Activated naive CD4-positive, alpha-beta T cell treated with anti-CD3 and anti-CD28 coated beads for 36 hours (primary cell): ENCODE measurements at regions of chr14 and their contacts with region 1.

Region 1: DNA sequence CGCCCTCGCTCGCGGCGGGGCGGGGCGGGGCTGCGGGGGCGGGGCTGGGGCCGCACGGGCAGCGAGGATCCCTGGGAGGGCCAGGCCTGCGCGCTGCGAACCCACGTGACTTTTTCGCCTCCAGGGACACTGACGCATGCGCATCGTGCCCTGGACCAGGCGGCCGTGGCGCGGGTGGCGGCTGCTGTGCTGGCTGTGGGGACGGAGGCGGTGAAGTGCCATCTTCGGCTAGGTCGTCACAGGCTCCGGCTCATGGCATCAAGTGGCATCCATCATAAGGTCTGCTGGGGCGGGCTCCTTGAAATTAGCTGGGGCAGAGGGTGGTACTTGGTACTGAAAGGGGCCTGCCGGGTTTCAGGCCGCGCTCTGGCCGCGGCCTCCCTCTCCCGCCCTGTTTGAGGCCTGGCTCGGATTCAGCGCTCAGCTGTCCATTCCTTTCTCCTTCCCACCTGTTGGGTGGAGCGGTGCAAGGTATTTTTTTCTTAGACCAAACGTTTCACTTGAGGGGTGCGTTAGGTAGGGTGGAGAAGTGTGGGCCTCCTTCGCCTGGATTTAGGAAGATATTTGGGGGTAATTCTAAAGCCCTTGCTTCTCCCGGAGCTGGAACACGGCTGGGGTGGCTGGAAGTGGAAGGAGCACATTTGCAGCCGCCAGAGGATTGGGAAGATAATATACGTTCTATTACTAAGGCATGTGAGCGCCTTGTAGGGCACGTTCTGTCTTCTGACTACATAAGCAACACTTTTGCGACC is at the start of gene PRPF39:
- DNase-seq: peak; percentile 94
- H3K4me3 Mint-ChIP-seq: peak within 1 kb of the TSS; percentile 96
- H3K27ac Mint-ChIP-seq: peak within 1 kb of the TSS; percentile 93
- H3K4me1 Mint-ChIP-seq: peaks cover 49% of the 10 kb centered on the region
- H3K27me3 Mint-ChIP-seq: no peaks in the 10 kb centered on the region
- total RNA-seq, gene PRPF39: 32.0 to 35.6 TPM

Region 2: DNA sequence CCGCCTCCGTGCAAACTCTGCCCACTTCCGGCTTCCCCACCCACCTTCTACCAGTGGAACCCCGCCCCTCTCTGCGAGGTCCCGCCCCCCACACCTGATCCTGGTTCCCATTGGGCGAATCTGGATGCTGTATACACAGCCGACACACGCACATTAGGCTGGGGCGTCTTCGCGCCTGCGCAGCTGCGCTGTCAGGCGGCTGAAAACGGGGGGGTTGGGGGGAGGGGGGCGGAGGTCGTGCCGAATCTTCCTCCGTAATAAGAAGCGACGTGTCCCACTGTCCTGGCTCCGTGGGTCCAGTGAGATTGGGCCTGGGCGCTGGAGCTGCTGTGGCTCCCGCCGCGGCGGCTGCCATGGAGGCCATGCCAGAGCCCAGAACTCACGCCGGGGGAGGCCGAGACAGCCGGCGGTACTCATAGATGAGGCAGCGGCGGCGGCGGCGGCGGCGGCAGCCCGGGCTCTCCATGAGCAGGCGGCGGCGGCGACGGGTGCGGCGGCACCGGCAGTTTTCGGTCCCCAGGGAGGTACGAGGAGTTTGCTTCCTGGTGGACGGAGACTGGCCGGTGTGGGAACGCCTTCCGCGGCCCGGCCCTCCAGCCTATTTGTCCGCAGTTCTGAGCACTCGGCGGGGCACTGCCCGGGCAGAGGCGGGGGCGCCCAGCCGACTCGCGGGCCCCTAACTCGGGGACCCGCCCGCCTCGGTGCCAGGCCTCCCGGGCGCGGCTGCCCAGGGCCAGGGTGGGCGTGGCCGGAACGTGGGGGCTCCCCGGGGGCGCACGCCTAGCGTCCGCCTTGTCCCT is 186.9 kb before region 1 on chr14:
- CTCF ChIA-PET with region 1: no interaction called
- intact Hi-C with region 1: loop called (anchors 1 kb)
- DNase-seq: peak; percentile 99
- H3K4me3 Mint-ChIP-seq: peak overlapping the region; percentile 89
- H3K27ac Mint-ChIP-seq: peak overlapping the region; percentile 83
- H3K4me1 Mint-ChIP-seq: peaks cover 13% of the 10 kb centered on the region
- H3K27me3 Mint-ChIP-seq: no peaks in the 10 kb centered on the region

Region 3: DNA sequence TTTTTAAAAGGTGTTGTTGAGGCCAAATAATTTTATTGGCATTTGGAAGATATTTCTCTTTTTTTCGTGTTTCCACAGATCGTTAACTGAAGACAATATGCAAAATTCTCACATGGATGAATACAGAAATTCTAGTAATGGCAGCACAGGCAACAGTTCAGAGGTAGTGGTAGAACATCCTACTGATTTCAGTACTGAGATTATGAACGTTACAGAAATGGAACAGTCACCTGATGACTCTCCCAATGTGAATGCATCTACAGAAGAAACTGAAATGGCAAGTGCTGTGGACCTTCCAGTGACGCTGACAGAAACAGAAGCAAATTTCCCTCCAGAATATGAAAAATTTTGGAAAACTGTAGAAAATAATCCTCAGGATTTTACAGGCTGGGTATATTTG is 11.0 kb after region 1 on chr14:
- CTCF ChIA-PET with region 1: no interaction called
- intact Hi-C with region 1: loop called (anchors 1 kb)
- DNase-seq: no peak
- H3K4me3 Mint-ChIP-seq: no peak overlapping the region
- H3K27ac Mint-ChIP-seq: no peak overlapping the region
- H3K4me1 Mint-ChIP-seq: peaks cover 44% of the 10 kb centered on the region
- H3K27me3 Mint-ChIP-seq: no peaks in the 10 kb centered on the region

Region 4: GRCh38 chr14:45114327-45114726 is 30.2 kb after region 1 on chr14:
- CTCF ChIA-PET with region 1: no interaction called
- intact Hi-C with region 1: loop called (anchors 1 kb)
- DNase-seq: no peak
- H3K4me3 Mint-ChIP-seq: no peak overlapping the region
- H3K27ac Mint-ChIP-seq: peak overlapping the region; percentile 68
- H3K4me1 Mint-ChIP-seq: peaks cover 23% of the 10 kb centered on the region
- H3K27me3 Mint-ChIP-seq: no peaks in the 10 kb centered on the region

Region 5: GRCh38 chr14:45169906-45170305 is 85.8 kb after region 1 on chr14:
- CTCF ChIA-PET with region 1: no interaction called
- intact Hi-C with region 1: no loop called
- DNase-seq: no peak
- H3K4me3 Mint-ChIP-seq: no peak overlapping the region
- H3K27ac Mint-ChIP-seq: no peak overlapping the region
- H3K4me1 Mint-ChIP-seq: no peaks in the 10 kb centered on the region
- H3K27me3 Mint-ChIP-seq: no peaks in the 10 kb centered on the region